ENCODE measurements at regions of chr7 and their contacts with region 1.

Region 1: GRCh38 chr7:76037310-76037709 is 10.5 kb downstream of the STYXL1 start:
- DNase-seq: no peak
- ATAC-seq: no peak
- H3K4me3 Mint-ChIP-seq: no peak overlapping the region
- H3K27ac Mint-ChIP-seq: no peak overlapping the region
- H3K4me1 Mint-ChIP-seq: peaks cover 5% of the 10 kb centered on the region
- H3K27me3 Mint-ChIP-seq: no peaks in the 10 kb centered on the region

Region 2: DNA sequence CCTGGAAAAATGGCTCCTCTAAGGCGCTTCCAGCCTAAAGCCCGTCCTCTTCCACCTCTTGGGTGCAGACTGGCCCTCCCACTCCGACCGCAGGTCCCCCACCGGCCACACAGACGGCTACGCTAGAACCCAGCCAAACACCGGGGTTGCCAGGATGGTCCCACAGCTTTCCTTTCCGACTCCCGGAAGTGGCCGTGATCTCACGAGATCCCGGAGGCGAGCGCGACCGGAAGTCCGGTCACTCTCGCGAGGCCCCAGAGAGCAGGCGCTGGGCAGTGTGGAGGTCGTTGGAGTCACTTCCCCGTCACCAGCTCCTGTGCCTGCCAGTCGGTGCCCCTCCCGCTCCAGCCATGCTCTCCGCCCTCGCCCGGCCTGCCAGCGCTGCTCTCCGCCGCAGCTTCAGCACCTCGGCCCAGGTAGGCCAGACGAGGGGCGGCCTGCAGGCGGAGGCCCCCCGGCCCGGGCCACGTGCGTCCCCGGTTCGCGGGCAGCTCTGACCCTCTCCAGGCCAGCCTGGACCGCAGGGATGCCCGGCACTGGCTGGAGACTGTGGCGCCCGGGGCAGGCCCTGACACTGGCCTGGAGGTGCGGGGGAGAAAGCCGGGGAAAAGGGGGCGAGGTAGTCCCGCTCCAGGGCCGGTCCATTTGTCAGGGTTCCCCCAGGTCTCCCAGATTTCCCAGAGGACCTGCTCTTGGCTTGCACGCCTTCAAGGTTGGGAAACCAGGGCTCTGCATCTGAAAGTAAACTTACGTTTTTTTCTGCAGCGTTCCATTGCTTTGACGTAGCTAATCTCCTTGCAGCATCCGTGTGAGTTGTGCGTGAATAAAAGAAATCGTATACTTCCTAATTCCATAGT is 10.7 kb after region 1 on chr7 and contains the starts of genes MDH2 and STYXL1:
- CTCF ChIA-PET with region 1: no interaction called
- POLR2A ChIA-PET with region 1: interaction called, 15 read pairs
- DNase-seq: peak; percentile 94
- ATAC-seq: peak; percentile 93
- H3K4me3 Mint-ChIP-seq: peak within 1 kb of the TSS; percentile 96
- H3K27ac Mint-ChIP-seq: peak within 1 kb of the TSS; percentile 95
- H3K4me1 Mint-ChIP-seq: peaks cover 42% of the 10 kb centered on the region
- H3K27me3 Mint-ChIP-seq: no peaks in the 10 kb centered on the region
- total RNA-seq, gene MDH2: 148 to 166 TPM
- total RNA-seq, gene STYXL1: 27.2 to 28.2 TPM

Measured in activated CD8-positive, alpha-beta T cell treated with anti-CD3 and anti-CD28 coated beads, Interleukin-2, amount 10 ng/mL, durations not matched to agents 7 days and 5 days (primary cell).